Gastrocnemius medialis (tissue), 4 donors: ENCODE measurements at regions of chr19 and their contacts with region 1.

Region 1: GRCh38 chr19:38335949-38336637 is 463 bp downstream of the CATSPERG start:
- DNase-seq: peak; percentile 92 to 94
- ATAC-seq: peak; percentile 84 to 86
- H3K4me3 ChIP-seq: peak overlapping the region; percentile 77 to 91 (median 79)
- H3K27ac ChIP-seq: peak overlapping the region; percentile 96 to 99 (median 98)
- H3K4me1 ChIP-seq: peaks cover 5 to 7% of the 10 kb centered on the region in 2 donors
- H3K27me3 ChIP-seq: no peaks in the 10 kb centered on the region
- CTCF ChIP-seq: no peak
- POLR2A ChIP-seq: peak; percentile 74 to 90

Region 2: DNA sequence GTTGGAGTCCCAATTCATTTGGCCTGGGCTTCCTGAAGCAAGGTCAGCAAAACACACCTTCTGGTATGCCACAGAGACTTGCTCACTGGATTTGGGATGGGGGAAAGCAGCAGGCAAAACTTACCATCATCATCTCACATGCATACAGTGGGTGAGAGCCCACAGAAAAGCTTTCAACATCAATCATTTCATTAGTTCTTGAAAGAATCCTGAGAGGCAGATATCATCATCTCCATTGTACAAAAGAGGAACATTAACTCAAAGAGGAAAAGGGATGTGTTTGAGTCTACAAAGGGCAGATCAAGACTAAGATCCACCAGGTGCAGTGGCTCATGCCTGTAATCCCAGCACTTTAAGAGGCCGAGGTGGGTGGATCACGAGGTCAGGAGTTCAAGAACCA is 436.1 kb before region 1 on chr19:
- in situ Hi-C with region 1: loop called (anchors 25 kb)
- intact Hi-C with region 1: loop called (anchors 2 kb)
- DNase-seq: no peak
- ATAC-seq: no peak
- H3K4me3 ChIP-seq: no peak overlapping the region
- H3K27ac ChIP-seq: no peak overlapping the region
- H3K4me1 ChIP-seq: no peaks in the 10 kb centered on the region
- H3K27me3 ChIP-seq: no peaks in the 10 kb centered on the region
- CTCF ChIP-seq: no peak
- POLR2A ChIP-seq: no peak

Region 3: DNA sequence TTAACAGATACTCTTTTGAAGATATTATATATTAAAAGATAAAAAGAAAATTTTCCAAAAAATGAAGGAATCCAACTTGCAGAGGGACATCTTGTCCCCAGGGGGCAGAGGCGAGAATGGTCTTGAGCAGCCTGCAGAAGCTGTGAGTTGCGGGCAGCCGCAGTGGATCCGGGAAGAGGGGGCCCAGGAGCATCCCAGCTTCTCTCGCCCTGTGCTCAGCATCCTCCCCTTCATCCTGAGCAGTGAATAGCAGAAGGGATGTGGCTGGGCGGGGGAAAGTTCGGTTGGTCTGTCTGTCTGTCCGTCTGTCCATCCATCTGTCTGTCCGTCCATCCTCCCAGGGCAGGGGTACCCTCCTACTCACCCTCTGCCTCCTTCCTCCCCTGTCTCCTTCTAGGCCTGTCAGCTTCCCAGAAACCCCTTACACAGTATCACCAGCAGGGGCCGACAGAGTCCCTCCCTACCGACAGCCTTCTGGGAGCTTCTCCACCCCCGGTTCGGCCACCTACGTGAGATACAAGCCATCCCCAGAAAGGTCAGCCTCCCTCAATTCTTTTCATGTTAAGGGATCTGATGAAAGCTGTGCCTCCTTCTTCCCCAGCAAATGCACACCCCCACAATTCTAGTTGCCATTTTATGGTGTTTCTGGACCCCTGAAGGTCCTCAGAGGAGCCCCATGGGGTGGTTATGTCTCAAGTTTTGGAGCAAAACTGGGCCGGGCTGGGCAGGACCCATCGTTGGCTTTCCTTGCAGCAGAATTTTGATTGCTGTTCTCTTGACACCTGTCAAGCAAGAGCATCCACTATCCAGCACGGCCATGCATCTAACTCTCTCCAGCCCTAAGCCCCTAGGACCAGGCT is 193.7 kb before region 1 on chr19:
- in situ Hi-C with region 1: loop called in 1 of 4 experiments (anchors 25 kb)
- intact Hi-C with region 1: loop called (anchors 2 kb)
- DNase-seq: peak; percentile 38 to 60
- ATAC-seq: peak; percentile 69 to 82
- H3K4me3 ChIP-seq: no peak overlapping the region
- H3K27ac ChIP-seq: no peak overlapping the region
- H3K4me1 ChIP-seq: peaks cover 0 to 11% of the 10 kb centered on the region in 2 donors
- H3K27me3 ChIP-seq: no peaks in the 10 kb centered on the region
- CTCF ChIP-seq: peak; percentile 52 to 81 (median 70)
- POLR2A ChIP-seq: no peak

Region 4: DNA sequence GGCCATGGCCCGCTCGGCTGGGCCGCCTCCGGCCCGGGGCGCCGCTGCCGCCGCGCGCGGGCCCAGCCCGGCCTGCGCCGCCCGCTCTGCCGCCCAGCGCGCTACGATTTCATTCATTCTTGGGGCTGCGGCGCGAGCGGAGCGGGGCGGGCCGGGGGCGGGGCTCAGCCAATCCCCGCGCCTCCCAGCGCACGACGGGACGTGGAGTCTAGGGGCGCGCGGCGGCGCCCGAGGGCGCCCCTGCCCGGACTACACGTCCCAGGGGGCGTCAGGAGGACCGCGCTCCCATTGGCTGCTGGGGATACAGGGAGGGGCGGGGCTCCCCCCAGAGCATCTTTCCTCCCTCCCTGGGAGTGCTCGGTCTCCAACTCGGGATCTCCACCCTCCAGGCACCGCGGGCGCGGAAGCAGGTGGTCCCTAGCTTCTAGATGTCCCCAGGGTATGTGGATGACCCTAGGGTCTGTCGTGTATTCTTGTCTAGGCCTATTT is 106.5 kb before region 1 on chr19:
- in situ Hi-C with region 1: no loop called
- intact Hi-C with region 1: loop called (anchors 2 kb)
- DNase-seq: no peak
- ATAC-seq: peak in 1 of 2 donors; percentile 27
- H3K4me3 ChIP-seq: no peak overlapping the region
- H3K27ac ChIP-seq: no peak overlapping the region
- H3K4me1 ChIP-seq: peaks cover 0 to 15% of the 10 kb centered on the region in 2 donors
- H3K27me3 ChIP-seq: peaks cover 39 to 54% (median 50%) of the 10 kb centered on the region in 3 donors
- CTCF ChIP-seq: no peak
- POLR2A ChIP-seq: no peak

Region 5: DNA sequence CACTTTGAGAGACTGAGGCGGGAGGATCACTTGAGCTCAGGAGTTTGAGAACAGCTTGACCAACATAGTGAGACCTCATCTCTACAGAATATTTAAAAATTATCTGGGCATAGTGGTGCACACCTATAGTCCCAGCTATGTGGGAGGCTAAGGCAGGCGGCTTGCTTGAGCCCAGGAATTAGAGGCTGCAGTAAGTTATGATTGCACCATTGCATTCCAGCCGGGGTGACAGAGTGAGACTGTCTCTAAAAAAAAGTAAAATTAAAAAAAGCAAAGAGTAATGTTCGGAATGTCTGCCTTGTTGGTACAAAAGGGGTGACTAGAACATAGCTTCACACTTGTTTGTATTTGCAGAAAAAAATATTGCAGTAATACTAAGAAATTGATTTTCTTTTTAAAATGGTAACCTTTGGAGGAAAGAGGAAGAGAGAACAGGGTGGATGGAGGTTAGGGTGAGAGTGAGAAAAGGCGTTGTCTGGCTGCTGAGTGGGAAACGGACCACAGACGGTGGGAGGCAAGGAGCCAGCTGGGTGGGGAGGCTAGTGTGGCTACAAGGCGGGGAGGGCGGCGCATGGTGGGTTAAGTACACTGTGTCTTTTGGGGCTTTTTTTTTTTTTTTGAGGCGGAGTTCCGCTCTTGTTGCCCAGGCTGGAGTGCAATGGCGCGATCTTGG is 90.1 kb before region 1 on chr19:
- in situ Hi-C with region 1: loop called (anchors 5 kb)
- intact Hi-C with region 1: loop called (anchors 1 kb)
- DNase-seq: no peak
- ATAC-seq: no peak
- H3K4me3 ChIP-seq: no peak overlapping the region
- H3K27ac ChIP-seq: peak overlapping the region in 3 of 4 donors; percentile 25 to 41 (median 30)
- H3K4me1 ChIP-seq: peaks cover 3 to 6% of the 10 kb centered on the region in 2 donors
- H3K27me3 ChIP-seq: peaks cover 0 to 6% (median 0%) of the 10 kb centered on the region in 3 donors
- CTCF ChIP-seq: no peak
- POLR2A ChIP-seq: no peak

Region 6: GRCh38 chr19:38374429-38375176 is 38.5 kb after region 1 on chr19 and contains the start of gene PSMD8:
- in situ Hi-C with region 1: no loop called
- intact Hi-C with region 1: loop called (anchors 1 kb)
- DNase-seq: peak; percentile 99 to 100
- ATAC-seq: peak; percentile 81 to 88
- H3K4me3 ChIP-seq: peak within 1 kb of the TSS; percentile 91 to 99 (median 96)
- H3K27ac ChIP-seq: peak within 1 kb of the TSS; percentile 97 to 100 (median 98)
- H3K4me1 ChIP-seq: peaks cover 16 to 25% of the 10 kb centered on the region in 2 donors
- H3K27me3 ChIP-seq: no peaks in the 10 kb centered on the region
- CTCF ChIP-seq: peak in 3 of 5 experiments; percentile 6 to 34 (median 16)
- POLR2A ChIP-seq: peak; percentile 99
- total RNA-seq, gene PSMD8: 819 to 1,400 (median 1,309) TPM